ENCODE measurements at regions of chr4 and their contacts with region 1.

Region 1: DNA sequence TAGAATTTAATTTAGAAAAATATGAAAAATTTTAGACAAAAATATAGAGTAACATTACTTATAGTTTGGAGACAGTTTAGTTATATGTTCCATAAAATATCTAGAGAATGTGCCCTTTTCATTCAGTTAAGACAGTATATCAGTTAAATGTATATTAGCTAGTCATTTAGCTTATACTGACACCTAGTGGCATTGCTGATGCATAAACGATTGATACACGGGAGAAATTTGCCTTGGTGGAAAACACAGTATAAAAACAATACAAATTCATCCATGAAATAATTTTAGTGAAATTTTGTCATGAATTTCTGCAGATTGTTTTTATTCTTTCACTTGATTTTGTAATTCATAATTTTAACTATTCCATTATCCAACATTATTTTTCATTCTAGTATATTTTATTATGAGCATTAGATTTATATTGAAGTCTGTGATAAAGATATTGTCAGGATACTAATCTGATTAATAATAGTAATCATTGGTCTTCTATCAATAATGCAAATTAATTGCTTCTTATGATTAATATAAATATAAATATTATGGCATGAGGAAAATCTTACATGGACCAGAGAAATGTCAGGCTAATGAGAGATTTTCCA is 219.0 kb downstream of the TLL1 start:
- DNase-seq: no peak
- H3K4me3 ChIP-seq: no peak overlapping the region
- H3K27ac ChIP-seq: no peak overlapping the region
- H3K4me1 ChIP-seq: no peaks in the 10 kb centered on the region
- H3K27me3 ChIP-seq: no peaks in the 10 kb centered on the region
- CTCF ChIP-seq: peak in 9 of 11 experiments; percentile 10 to 65 (median 63)
- POLR2A ChIP-seq: no peak

Region 2: GRCh38 chr4:165493359-165493758 is 598.7 kb before region 1 on chr4:
- intact Hi-C with region 1: loop called (anchors 10 kb)
- DNase-seq: peak; percentile 87
- H3K4me3 ChIP-seq: peak overlapping the region in 1 of 8 donors; percentile 32
- H3K27ac ChIP-seq: no peak overlapping the region
- H3K4me1 ChIP-seq: peaks cover 0 to 9% (median 7%) of the 10 kb centered on the region in 6 donors
- H3K27me3 ChIP-seq: peaks cover 0 to 36% (median 0%) of the 10 kb centered on the region in 7 donors
- CTCF ChIP-seq: peak in 10 of 11 experiments; percentile 7 to 70 (median 53)
- POLR2A ChIP-seq: no peak

Region 3: DNA sequence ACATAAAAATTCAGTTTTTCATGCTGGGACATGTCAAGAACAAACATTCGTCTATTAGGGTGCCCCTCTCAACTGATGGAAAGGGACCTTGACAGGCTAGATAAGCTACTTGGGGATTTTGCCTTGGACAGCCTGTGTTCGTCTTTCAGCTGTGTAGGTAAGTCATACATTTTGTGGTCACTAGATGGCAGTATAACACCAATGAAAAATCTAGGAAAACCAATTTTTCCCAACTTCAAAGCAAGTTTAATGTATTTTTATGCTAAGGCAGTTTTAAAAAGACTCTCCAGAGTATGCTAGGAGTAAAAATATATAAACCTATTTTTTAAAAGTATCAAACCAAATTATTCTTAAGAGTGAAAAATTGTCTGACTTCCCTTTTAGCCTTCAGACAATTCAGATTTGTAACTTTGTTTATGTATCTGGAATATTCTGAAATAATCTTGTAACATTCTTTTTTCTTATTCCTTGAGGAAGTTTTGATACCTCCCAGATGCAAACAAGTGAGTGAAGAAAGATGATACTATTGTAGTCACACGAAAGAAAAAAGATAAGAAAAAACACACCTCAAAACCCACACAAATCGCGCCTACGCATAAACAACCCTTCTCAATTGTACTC is 554.9 kb before region 1 on chr4:
- intact Hi-C with region 1: loop called (anchors 5 kb)
- DNase-seq: no peak
- H3K4me3 ChIP-seq: no peak overlapping the region
- H3K27ac ChIP-seq: no peak overlapping the region
- H3K4me1 ChIP-seq: no peaks in the 10 kb centered on the region
- H3K27me3 ChIP-seq: no peaks in the 10 kb centered on the region
- CTCF ChIP-seq: peak; percentile 33 to 86 (median 72)
- POLR2A ChIP-seq: no peak

Region 4: DNA sequence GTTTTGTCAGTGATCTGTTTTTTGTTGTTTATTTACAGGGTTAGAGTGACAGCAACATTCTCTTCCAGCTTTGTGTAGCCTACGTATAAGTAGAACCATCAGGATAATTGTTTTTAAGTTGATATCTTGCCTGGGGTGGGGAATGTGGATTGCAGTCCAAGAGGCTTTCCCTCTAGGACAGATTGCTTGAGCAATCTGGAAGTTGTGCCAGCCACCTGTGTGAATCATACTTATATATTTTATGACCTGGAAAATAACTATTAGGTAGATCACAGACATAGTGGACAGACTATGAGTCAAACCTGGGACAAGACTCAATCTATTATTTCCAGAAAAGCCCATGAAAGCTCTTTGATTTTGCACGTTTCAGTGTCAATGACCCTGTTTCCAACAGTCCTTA is 120.1 kb before region 1 on chr4:
- intact Hi-C with region 1: no loop called
- DNase-seq: no peak
- H3K4me3 ChIP-seq: no peak overlapping the region
- H3K27ac ChIP-seq: no peak overlapping the region
- H3K4me1 ChIP-seq: no peaks in the 10 kb centered on the region
- H3K27me3 ChIP-seq: no peaks in the 10 kb centered on the region
- CTCF ChIP-seq: no peak
- POLR2A ChIP-seq: no peak

Measured in spleen (tissue), 13 donors.